ENCODE measurements at regions of chr18 and their contacts with region 1.

Region 1: DNA sequence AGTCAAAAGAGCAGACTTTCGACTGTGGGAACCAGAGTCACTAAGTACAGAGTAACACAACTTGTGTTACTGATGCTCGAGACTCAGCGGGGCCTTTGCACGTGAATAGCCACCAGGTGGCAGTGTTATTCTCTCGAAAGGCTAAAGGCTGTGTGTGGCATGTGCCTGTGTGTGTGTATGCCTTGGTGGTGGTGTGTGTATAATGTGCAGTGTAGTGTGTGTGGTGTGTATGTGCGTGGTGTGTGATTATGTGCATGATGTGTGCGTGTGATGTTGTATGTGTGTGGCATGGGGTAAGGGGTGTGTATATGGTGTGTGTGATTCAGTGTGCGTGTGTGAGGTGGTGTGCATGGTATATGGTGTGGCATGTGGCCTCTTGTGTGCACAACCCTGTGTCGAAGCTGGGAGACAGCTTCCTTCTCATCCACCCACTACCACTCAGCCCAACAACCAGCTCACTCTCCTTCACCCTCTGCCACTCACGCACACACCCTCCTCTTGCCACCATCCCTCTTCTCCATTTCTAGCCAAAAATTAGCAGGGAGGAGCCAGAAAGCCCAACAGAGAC is 83.0 kb upstream of the ZNF532 start:
- DNase-seq: peak in 2 of 3 donors; percentile 79 to 90
- ATAC-seq: peak; percentile 80
- H3K4me3 ChIP-seq: no peak overlapping the region
- H3K4me1 ChIP-seq: peaks cover 10% of the 10 kb centered on the region
- CTCF ChIP-seq: peak; percentile 52

Region 2: DNA sequence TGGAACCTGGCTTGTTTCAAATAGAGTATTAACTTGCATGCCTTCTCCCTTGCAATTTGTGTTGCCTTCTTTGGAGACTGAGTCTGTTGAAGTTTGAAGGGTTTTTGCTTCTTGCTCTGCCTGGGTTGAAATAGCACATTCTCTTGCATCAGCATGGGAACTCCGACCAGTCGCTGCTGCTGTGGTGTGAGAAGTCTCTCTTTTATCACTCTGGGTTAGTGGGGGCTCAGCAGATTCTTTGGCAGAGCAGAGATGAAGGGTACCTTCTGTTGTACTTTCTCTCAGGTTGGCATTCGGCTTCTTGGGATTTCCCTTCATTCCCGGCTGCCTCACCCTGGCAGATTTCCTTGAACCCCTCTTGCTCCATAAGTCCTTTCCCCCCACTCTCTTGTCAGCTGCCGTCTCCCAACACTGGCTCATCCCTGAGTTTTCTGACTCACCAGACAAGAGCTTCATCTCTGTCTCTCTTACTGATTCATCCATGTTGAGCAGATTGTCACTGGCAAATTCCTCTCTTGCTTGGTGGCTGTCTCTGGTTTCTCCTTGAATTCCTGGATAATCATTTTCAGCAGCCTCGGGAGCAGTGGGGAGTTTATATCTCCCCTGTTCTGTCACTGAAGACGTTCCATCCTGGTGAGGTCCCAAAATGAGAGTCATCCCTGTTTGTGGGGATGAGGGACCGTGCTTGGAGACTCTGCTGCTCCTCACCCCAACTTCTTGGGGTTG is 202.7 kb before region 1 on chr18:
- intact Hi-C with region 1: no loop called
- DNase-seq: no peak
- ATAC-seq: peak; percentile 16
- H3K4me3 ChIP-seq: no peak overlapping the region
- H3K4me1 ChIP-seq: no peaks in the 10 kb centered on the region
- CTCF ChIP-seq: no peak

Region 3: DNA sequence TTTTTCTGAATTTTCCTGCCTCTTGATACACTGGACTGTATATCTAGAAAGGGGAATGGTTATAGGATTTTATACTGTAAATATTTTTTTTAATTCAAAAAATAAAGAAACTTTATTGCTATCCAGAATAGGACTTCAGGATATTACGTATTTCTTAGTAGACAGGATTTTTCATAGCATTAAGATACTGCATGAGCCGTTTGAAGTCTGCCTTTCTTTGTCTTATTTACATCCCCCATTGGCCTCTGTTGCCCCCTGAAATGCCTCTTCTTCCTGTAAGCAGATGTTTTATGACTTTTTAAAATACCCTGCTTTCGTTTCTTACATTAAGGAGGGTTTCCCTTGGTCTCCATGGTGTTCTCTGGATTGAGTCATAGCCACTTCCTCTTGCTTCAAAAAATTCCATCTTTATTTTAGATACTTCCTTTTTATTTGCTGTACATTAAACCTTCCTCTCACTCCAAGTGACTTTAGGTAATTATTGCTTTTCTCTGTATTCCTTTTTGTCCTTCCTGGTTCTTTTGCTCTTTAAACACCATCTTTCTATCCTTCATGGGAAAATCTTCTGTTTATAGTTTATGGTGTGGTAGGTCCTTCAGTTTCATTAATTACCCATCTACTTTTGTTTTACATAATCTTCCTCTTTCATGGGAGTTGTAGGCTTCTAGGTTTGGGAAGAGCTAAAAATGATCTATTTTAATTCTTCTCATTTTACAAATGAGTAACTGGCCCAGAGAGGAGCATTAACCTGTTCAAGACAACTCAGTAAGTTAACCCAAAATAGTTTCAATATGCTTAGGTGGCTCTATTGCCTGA is 155.6 kb after region 1 on chr18:
- intact Hi-C with region 1: loop called in 1 of 2 experiments (anchors 10 kb)
- DNase-seq: no peak
- ATAC-seq: no peak
- H3K4me3 ChIP-seq: no peak overlapping the region
- H3K4me1 ChIP-seq: no peaks in the 10 kb centered on the region
- CTCF ChIP-seq: no peak

Region 4: GRCh38 chr18:59067873-59068272 is 286.2 kb after region 1 on chr18:
- intact Hi-C with region 1: loop called (anchors 5 kb)
- DNase-seq: peak in 1 of 3 donors; percentile 69
- ATAC-seq: no peak
- H3K4me3 ChIP-seq: no peak overlapping the region
- H3K4me1 ChIP-seq: no peaks in the 10 kb centered on the region
- CTCF ChIP-seq: no peak